Heart right ventricle (tissue), 16 donors: ENCODE measurements at regions of chr17 and their contacts with region 1.

Region 1: DNA sequence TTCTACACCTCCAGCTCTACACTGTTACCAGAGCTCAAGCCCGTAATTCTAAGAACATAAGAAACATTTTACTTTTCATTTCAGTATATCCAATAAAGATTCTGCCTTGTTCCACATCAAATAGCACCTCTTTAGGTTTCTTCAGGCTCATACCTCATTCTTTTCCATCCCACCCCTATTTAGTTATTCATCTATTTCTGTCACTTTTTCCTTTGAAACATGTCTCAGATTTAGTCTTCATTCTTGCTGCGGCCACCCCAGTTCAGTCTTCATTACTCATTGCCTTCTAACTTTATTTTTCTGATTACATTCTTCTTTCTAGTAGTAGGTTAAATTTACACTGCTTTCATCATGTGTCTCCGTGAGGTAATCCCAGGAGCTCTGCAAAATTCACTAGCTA is 33.5 kb downstream of the PPM1E start:
- DNase-seq: no peak
- ATAC-seq: no peak
- H3K4me3 ChIP-seq: no peak overlapping the region
- H3K27ac ChIP-seq: no peak overlapping the region
- H3K4me1 ChIP-seq: peaks cover 0 to 10% (median 0%) of the 10 kb centered on the region in 9 donors
- H3K27me3 ChIP-seq: peaks cover 0 to 8% (median 0%) of the 10 kb centered on the region in 7 donors
- CTCF ChIP-seq: no peak

Region 2: DNA sequence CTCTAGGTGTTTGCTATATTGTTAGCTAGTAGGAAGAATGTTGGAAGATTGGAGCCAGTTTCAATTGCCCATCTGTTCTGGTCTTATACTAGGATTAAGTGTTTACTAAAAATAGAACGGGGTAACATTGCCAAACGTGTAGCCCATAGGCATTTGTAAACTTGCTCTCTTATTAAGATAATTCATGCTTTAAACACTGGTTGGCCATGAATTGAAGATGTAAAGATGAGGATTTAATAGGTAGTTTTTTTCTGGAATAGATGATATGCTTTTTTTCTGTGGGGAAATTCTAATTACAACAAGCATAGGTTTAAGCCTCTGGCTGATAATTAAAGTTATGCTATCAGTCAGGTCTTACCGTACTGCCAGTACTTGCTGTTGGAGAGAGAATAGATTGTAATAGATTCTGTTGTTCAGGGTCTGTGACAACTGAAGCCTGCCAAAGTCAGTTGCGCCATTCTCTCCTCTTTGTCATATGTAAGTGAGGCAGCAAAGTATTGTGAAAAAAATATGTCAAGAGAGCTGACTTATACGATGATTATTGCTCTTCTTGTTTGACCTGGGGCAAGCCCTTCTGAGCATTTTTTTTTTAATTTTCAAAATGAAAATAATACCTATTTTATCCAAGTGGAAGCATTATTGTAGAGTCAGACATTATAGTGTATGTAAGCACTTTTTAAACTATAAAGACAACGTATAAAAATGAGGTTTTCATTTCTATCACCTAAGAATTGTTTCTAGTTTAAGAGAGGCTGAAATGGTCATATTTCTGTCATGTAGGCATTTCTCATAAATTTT is 33.5 kb after region 1 on chr17:
- intact Hi-C with region 1: loop called in 1 of 10 experiments (anchors 2 kb)
- DNase-seq: no peak
- ATAC-seq: peak in 4 of 8 donors; percentile 37 to 84 (median 64)
- H3K4me3 ChIP-seq: peak overlapping the region in 1 of 10 donors; percentile 3
- H3K27ac ChIP-seq: no peak overlapping the region
- H3K4me1 ChIP-seq: peaks cover 0 to 4% (median 0%) of the 10 kb centered on the region in 9 donors
- H3K27me3 ChIP-seq: no peaks in the 10 kb centered on the region
- CTCF ChIP-seq: no peak